ENCODE measurements at regions of chr11 and their contacts with region 1.

Region 1: DNA sequence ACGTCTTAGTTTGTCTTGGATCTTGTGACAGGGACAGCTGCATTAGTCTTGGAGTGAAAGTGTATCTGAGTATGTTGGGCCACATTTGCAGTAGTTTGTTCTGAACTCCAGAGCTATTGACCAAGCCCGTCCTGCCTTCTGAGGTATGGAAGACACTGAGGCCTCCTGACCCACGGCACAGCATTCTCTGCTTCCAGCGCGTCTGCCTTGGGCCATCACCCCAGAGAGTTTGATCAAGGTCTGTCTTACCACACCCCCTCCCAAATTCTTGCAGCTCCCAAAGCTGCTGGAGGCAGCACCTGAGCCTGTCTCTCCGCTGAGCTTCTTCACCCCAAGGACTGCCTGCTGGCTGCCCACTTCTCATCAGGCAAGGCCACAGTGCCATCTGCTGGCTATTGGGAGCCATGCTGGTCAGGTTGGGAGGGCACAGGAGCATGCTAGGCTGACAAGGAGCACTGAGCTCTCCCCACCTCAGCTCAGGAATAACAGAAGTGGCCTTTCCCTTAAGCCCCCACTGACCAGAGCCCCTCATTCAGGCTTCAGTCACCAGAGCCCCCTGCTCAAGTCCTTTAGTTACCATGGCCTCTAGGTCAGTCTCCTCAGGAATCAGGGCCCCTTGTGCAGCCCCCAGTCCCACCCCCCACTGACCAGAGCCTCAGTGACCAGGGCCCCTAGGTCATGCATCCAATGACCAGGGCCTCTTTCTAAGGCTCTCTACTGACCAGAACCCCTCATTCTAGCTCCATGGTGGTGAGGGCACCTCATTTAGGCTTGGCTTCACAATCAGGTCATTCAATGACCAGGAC is 27.2 kb upstream of the SMPD1 start:
- DNase-seq: no peak
- H3K4me3 ChIP-seq: no peak overlapping the region
- H3K27me3 ChIP-seq: peaks cover 2% of the 10 kb centered on the region; the same call in 1 of the 2 replicates
- CTCF ChIP-seq: peak; percentile 98

Region 2: DNA sequence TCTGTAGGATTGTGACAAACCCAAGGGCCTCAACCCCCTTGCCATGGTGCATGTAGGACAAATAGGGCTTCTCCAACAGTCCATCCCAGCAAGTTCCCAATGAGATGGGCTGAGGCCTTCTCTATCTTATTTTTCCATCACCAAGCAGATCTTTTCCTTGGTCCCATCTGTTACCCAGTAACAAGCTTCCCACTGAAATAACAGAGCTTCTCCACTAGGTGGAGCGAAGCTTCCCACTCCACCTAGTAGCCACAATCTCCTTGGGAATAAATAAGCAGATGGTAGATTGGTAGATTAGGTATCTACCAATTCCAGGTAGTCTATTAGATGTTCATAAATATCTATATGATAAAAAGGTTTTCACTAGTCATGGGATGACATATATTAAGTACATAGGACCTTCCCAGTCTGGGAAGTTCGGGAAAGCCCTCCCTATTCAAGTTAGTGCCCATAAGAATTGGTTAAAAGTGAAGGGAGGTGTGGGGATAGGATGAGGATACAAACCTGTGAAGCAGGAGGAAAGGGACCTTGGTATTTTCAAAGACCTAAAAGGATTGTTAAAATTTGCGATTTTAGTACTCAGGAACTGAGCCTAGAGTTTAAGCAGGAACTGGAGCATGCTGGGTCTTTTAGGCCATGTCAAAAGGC is 370.3 kb before region 1 on chr11:
- CTCF ChIA-PET with region 1: interaction called, 16 read pairs
- POLR2A ChIA-PET with region 1: no interaction called
- DNase-seq: no peak
- H3K4me3 ChIP-seq: no peak overlapping the region
- H3K27me3 ChIP-seq: no peaks in the 10 kb centered on the region
- CTCF ChIP-seq: peak; percentile 54

Region 3: GRCh38 chr11:6022956-6023355 is 340.1 kb before region 1 on chr11:
- CTCF ChIA-PET with region 1: interaction called, 46 read pairs
- POLR2A ChIA-PET with region 1: no interaction called
- DNase-seq: no peak
- H3K4me3 ChIP-seq: no peak overlapping the region
- H3K27me3 ChIP-seq: no peaks in the 10 kb centered on the region
- CTCF ChIP-seq: peak; percentile 48

Region 4: GRCh38 chr11:6298605-6299004 is 64.5 kb before region 1 on chr11:
- CTCF ChIA-PET with region 1: interaction called, 120 read pairs
- POLR2A ChIA-PET with region 1: no interaction called
- DNase-seq: no peak
- H3K4me3 ChIP-seq: no peak overlapping the region
- H3K27me3 ChIP-seq: 0 out of 2 replicates have a peak, but pooled peaks cover under 1% of the 10 kb centered on the region
- CTCF ChIP-seq: peak; percentile 76

Region 5: DNA sequence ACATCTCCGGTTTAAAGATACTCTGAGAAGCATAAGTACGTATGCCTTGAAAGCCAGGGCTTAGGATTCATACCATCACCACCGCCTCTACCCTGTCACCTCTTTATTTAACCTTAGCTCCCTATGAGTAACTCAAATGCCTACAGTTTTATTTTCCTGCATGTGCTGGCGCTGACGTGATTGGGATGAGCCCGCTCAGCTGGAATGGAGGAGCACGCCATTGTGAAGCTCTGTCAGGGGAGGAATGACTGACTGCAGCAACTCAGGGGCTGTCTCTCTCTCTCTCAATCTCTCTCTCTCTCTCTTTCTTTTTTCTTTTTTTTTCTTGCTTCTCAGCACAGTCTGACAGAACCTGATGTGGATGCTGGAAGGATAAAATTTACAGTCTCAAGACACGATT is 55.2 kb before region 1 on chr11:
- CTCF ChIA-PET with region 1: interaction called, 120 read pairs
- POLR2A ChIA-PET with region 1: no interaction called
- DNase-seq: no peak
- H3K4me3 ChIP-seq: no peak overlapping the region
- H3K27me3 ChIP-seq: 0 out of 2 replicates have a peak, but pooled peaks cover 2% of the 10 kb centered on the region
- CTCF ChIP-seq: no peak

Region 6: DNA sequence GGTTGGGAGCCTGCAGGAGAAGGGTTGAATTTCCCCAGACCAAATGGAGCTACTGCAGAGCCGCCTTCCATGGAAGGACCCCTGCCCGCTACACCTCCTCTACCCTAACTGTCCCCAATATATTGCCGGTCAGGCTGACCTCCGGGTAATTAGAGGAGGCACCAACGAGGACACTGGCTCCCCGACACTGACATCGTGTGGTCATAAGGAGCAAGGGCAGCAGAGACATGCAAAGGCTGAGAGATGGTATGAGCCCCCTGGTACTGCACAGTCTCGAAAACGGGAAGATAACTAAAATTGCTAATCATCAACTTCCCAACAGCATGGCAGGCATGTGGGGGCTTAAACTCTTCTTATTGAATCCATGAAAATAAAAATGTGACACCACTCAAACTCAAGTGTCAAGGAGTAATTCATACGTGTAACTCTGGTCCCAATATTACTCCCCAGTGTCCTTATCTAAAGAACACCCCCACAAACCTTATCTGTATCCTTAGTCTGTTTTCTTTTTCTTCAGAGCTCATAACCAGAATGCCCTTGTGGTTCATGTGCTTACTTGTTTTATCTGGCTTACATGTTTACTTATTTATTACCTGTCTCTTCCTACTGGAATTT is 47.2 kb before region 1 on chr11:
- CTCF ChIA-PET with region 1: interaction called, 22 read pairs
- POLR2A ChIA-PET with region 1: interaction called, 7 read pairs
- DNase-seq: no peak
- H3K4me3 ChIP-seq: no peak overlapping the region
- H3K27me3 ChIP-seq: no peaks in the 10 kb centered on the region
- CTCF ChIP-seq: peak; percentile 93